Naive thymus-derived CD4-positive, alpha-beta T cell (primary cell): ENCODE measurements at regions of chr3 and their contacts with region 1.

Region 1: GRCh38 chr3:150094150-150094925 is 123.6 kb upstream of the PFN2 start:
- DNase-seq: no peak
- ATAC-seq: no peak
- H3K4me3 ChIP-seq: no peak overlapping the region
- H3K4me3 Mint-ChIP-seq: no peak overlapping the region
- H3K27ac ChIP-seq: no peak overlapping the region
- H3K27ac Mint-ChIP-seq: no peak overlapping the region
- H3K4me1 ChIP-seq: no peaks in the 10 kb centered on the region
- H3K4me1 Mint-ChIP-seq: peaks cover 0 to 4% (median 0%) of the 10 kb centered on the region in 7 donors
- H3K27me3 ChIP-seq: no peaks in the 10 kb centered on the region
- H3K27me3 Mint-ChIP-seq: peaks cover 0 to 16% (median 4%) of the 10 kb centered on the region in 5 donors

Region 2: GRCh38 chr3:150149651-150150051 is 55.3 kb after region 1 on chr3:
- CTCF ChIA-PET with region 1: no interaction called
- POLR2A ChIA-PET with region 1: no interaction called
- intact Hi-C with region 1: loop called in 1 of 2 experiments (anchors 10 kb)
- DNase-seq: no peak
- ATAC-seq: no peak
- H3K4me3 ChIP-seq: no peak overlapping the region
- H3K4me3 Mint-ChIP-seq: no peak overlapping the region
- H3K27ac ChIP-seq: no peak overlapping the region
- H3K27ac Mint-ChIP-seq: no peak overlapping the region
- H3K4me1 ChIP-seq: no peaks in the 10 kb centered on the region
- H3K4me1 Mint-ChIP-seq: peaks cover 0 to 5% (median 0%) of the 10 kb centered on the region in 7 donors
- H3K27me3 ChIP-seq: no peaks in the 10 kb centered on the region
- H3K27me3 Mint-ChIP-seq: peaks cover 16 to 47% (median 33%) of the 10 kb centered on the region in 5 donors

Region 3: GRCh38 chr3:150238998-150239619 is 144.8 kb after region 1 on chr3:
- CTCF ChIA-PET with region 1: no interaction called
- POLR2A ChIA-PET with region 1: no interaction called
- intact Hi-C with region 1: no loop called
- DNase-seq: no peak
- ATAC-seq: no peak
- H3K4me3 ChIP-seq: no peak overlapping the region
- H3K4me3 Mint-ChIP-seq: no peak overlapping the region
- H3K27ac ChIP-seq: no peak overlapping the region
- H3K27ac Mint-ChIP-seq: no peak overlapping the region
- H3K4me1 ChIP-seq: no peaks in the 10 kb centered on the region
- H3K4me1 Mint-ChIP-seq: no peaks in the 10 kb centered on the region
- H3K27me3 ChIP-seq: no peaks in the 10 kb centered on the region
- H3K27me3 Mint-ChIP-seq: peaks cover 8 to 25% (median 15%) of the 10 kb centered on the region in 5 donors

Region 4: GRCh38 chr3:150577859-150578258 is 483.5 kb after region 1 on chr3:
- CTCF ChIA-PET with region 1: no interaction called
- POLR2A ChIA-PET with region 1: no interaction called
- intact Hi-C with region 1: no loop called
- DNase-seq: no peak
- ATAC-seq: no peak
- H3K4me3 ChIP-seq: no peak overlapping the region
- H3K4me3 Mint-ChIP-seq: no peak overlapping the region
- H3K27ac ChIP-seq: no peak overlapping the region
- H3K27ac Mint-ChIP-seq: peak overlapping the region in 4 of 9 donors; percentile 4 to 62 (median 34)
- H3K4me1 ChIP-seq: no peaks in the 10 kb centered on the region
- H3K4me1 Mint-ChIP-seq: peaks cover 4 to 40% (median 26%) of the 10 kb centered on the region in 7 donors
- H3K27me3 ChIP-seq: no peaks in the 10 kb centered on the region
- H3K27me3 Mint-ChIP-seq: no peaks in the 10 kb centered on the region